ENCODE measurements at regions of chr3 and their contacts with region 1.

Region 1: DNA sequence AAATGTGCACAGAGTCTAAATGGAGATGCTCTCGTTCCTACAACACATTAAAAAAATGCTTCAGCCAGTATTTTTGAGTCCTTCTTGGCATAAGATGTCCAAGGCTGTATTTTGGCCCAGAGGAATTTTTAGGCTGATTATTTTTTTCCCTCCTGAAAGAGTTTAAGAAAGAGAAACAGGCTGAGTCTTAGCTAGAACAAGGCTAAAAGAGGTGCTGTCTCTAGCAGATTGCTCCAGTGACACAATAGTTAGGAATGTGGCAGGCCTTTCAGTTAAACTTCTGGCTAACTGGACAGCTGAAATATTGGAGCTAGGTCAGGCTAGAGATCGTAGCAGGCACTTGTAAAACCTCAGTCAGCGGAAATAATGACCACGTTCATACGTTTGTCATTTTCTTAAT is 271.4 kb upstream of the RARB start:
- DNase-seq: no peak
- ATAC-seq: no peak
- H3K4me3 ChIP-seq: no peak overlapping the region
- H3K27ac ChIP-seq: no peak overlapping the region
- H3K4me1 ChIP-seq: no peaks in the 10 kb centered on the region
- H3K27me3 ChIP-seq: no peaks in the 10 kb centered on the region
- CTCF ChIP-seq: no peak

Region 2: GRCh38 chr3:25120665-25121064 is 36.0 kb before region 1 on chr3:
- CTCF ChIA-PET with region 1: interaction called, 11 read pairs
- POLR2A ChIA-PET with region 1: no interaction called
- in situ Hi-C with region 1: no loop called
- intact Hi-C with region 1: no loop called
- DNase-seq: no peak
- ATAC-seq: no peak
- H3K4me3 ChIP-seq: no peak overlapping the region
- H3K27ac ChIP-seq: no peak overlapping the region
- H3K4me1 ChIP-seq: no peaks in the 10 kb centered on the region
- H3K27me3 ChIP-seq: no peaks in the 10 kb centered on the region
- CTCF ChIP-seq: no peak

Measured in Panc1 (cell line).